Activated CD8-positive, alpha-beta T cell treated with anti-CD3 and anti-CD28 coated beads, Interleukin-2, amount 10 ng/mL, durations not matched to agents 7 days and 5 days (primary cell): ENCODE measurements at regions of chr7 and their contacts with region 1.

Region 1: GRCh38 chr7:100705753-100706671 is at the start of gene POP7:
- DNase-seq: peak; percentile 99
- ATAC-seq: peak; percentile 96
- H3K4me3 Mint-ChIP-seq: peak within 1 kb of the TSS; percentile 96
- H3K27ac Mint-ChIP-seq: peak within 1 kb of the TSS; percentile 98
- H3K4me1 Mint-ChIP-seq: peaks cover 19% of the 10 kb centered on the region
- H3K27me3 Mint-ChIP-seq: peaks cover 4% of the 10 kb centered on the region
- total RNA-seq, gene POP7: 43.6 to 48.3 TPM

Region 2: DNA sequence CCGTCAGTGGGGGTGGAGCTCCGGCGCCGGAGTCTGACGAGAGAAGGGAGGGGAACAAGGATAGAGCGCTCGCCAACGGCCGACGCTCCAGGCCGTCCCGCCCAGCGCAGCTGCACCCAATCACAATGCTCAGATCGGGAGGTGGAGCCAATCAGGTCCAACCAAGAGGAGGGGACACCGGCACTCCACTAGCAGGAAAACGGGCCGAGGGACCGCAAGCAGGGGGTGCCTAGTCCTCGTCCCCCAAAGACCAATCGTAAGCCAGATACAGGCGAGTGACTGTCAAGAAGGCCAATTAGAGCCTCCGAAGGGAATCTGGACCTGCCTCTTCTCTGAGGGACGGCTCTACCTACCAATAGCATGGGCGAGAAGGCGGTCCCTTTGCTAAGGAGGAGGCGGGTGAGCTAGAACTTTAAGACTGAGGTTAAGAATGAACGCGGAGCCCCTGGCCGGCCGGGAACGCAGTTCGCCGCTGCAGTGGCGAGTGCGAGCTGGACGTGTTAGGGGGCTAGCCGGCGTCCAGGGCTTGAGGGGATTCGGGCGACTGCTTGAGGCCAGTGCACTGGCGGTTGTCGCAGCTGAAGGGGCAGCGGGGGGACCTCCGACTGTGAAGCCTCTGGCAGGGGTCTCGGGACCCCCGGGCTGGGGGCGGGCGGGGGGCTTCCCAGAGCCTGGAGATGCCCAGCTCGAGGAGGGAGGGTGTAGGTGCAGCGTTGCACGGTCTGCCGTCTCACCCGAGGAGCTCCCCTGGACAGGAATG is 119.6 kb before region 1 on chr7 and contains the start of gene FBXO24:
- CTCF ChIA-PET with region 1: interaction called, 34 read pairs
- POLR2A ChIA-PET with region 1: interaction called, 5 read pairs
- DNase-seq: peak; percentile 100
- ATAC-seq: peak; percentile 87
- H3K4me3 Mint-ChIP-seq: peak within 1 kb of the TSS; percentile 93
- H3K27ac Mint-ChIP-seq: peak within 1 kb of the TSS; percentile 98
- H3K4me1 Mint-ChIP-seq: peaks cover 26% of the 10 kb centered on the region
- H3K27me3 Mint-ChIP-seq: peaks cover 10% of the 10 kb centered on the region
- total RNA-seq, gene FBXO24: 0.37 to 0.45 TPM

Region 3: GRCh38 chr7:100611974-100612729 is 93.9 kb before region 1 on chr7 and contains the start of gene MOSPD3:
- CTCF ChIA-PET with region 1: interaction called, 25 read pairs
- POLR2A ChIA-PET with region 1: no interaction called
- DNase-seq: peak; percentile 98
- ATAC-seq: peak; percentile 94
- H3K4me3 Mint-ChIP-seq: peak within 1 kb of the TSS; percentile 95
- H3K27ac Mint-ChIP-seq: peak within 1 kb of the TSS; percentile 99
- H3K4me1 Mint-ChIP-seq: peaks cover 30% of the 10 kb centered on the region
- H3K27me3 Mint-ChIP-seq: peaks cover 6% of the 10 kb centered on the region
- total RNA-seq, gene MOSPD3: 42.1 to 43.5 TPM

Region 4: GRCh38 chr7:100673300-100673941 is 32.6 kb before region 1 on chr7 and contains the start of gene GNB2:
- CTCF ChIA-PET with region 1: interaction called, 12 read pairs
- POLR2A ChIA-PET with region 1: interaction called, 3 read pairs
- DNase-seq: peak; percentile 99
- ATAC-seq: peak; percentile 69
- H3K4me3 Mint-ChIP-seq: peak within 1 kb of the TSS; percentile 96
- H3K27ac Mint-ChIP-seq: peak within 1 kb of the TSS; percentile 96
- H3K4me1 Mint-ChIP-seq: peaks cover 26% of the 10 kb centered on the region
- H3K27me3 Mint-ChIP-seq: peaks cover 10% of the 10 kb centered on the region
- total RNA-seq, gene GNB2: 274 to 286 TPM

Region 5: GRCh38 chr7:100691676-100692577 is 14.1 kb before region 1 on chr7:
- CTCF ChIA-PET with region 1: interaction called, 128 read pairs
- POLR2A ChIA-PET with region 1: interaction called, 17 read pairs
- DNase-seq: peak; percentile 88
- ATAC-seq: peak; percentile 78
- H3K4me3 Mint-ChIP-seq: peak overlapping the region; percentile 94
- H3K27ac Mint-ChIP-seq: peak overlapping the region; percentile 65
- H3K4me1 Mint-ChIP-seq: peaks cover 37% of the 10 kb centered on the region
- H3K27me3 Mint-ChIP-seq: peaks cover 9% of the 10 kb centered on the region

Region 6: GRCh38 chr7:100726996-100727761 is 21.2 kb after region 1 on chr7:
- CTCF ChIA-PET with region 1: interaction called, 62 read pairs
- POLR2A ChIA-PET with region 1: no interaction called
- DNase-seq: no peak
- ATAC-seq: no peak
- H3K4me3 Mint-ChIP-seq: no peak overlapping the region
- H3K27ac Mint-ChIP-seq: no peak overlapping the region
- H3K4me1 Mint-ChIP-seq: peaks cover 4% of the 10 kb centered on the region
- H3K27me3 Mint-ChIP-seq: peaks cover 13% of the 10 kb centered on the region

Region 7: GRCh38 chr7:100889761-100890634 is 184.0 kb after region 1 on chr7:
- CTCF ChIA-PET with region 1: interaction called, 11 read pairs
- POLR2A ChIA-PET with region 1: no interaction called
- DNase-seq: peak; percentile 93
- ATAC-seq: peak; percentile 92
- H3K4me3 Mint-ChIP-seq: peak overlapping the region; percentile 82
- H3K27ac Mint-ChIP-seq: peak overlapping the region; percentile 77
- H3K4me1 Mint-ChIP-seq: peaks cover 46% of the 10 kb centered on the region
- H3K27me3 Mint-ChIP-seq: peaks cover 22% of the 10 kb centered on the region